Esophagus squamous epithelium (tissue), 5 donors: ENCODE measurements at regions of chr11 and their contacts with region 1.

Region 1: GRCh38 chr11:63635762-63636465 is 21.7 kb upstream of the PLAAT3 start:
- DNase-seq: no peak
- H3K4me3 ChIP-seq: no peak overlapping the region
- H3K27ac ChIP-seq: no peak overlapping the region
- H3K4me1 ChIP-seq: no peaks in the 10 kb centered on the region
- H3K27me3 ChIP-seq: no peaks in the 10 kb centered on the region
- CTCF ChIP-seq: peak; percentile 57 to 85 (median 72)
- POLR2A ChIP-seq: no peak

Region 2: GRCh38 chr11:63478896-63479295 is 157.0 kb before region 1 on chr11:
- intact Hi-C with region 1: loop called (anchors 5 kb)
- DNase-seq: no peak
- H3K4me3 ChIP-seq: no peak overlapping the region
- H3K27ac ChIP-seq: no peak overlapping the region
- H3K4me1 ChIP-seq: no peaks in the 10 kb centered on the region
- H3K27me3 ChIP-seq: no peaks in the 10 kb centered on the region
- CTCF ChIP-seq: peak; percentile 60 to 92 (median 88)
- POLR2A ChIP-seq: no peak

Region 3: GRCh38 chr11:63687845-63688244 is 51.9 kb after region 1 on chr11:
- intact Hi-C with region 1: no loop called
- DNase-seq: no peak
- H3K4me3 ChIP-seq: no peak overlapping the region
- H3K27ac ChIP-seq: peak overlapping the region in 2 of 4 donors; percentile 34 to 38
- H3K4me1 ChIP-seq: peaks cover 9 to 82% (median 29%) of the 10 kb centered on the region in 3 donors
- H3K27me3 ChIP-seq: no peaks in the 10 kb centered on the region
- CTCF ChIP-seq: no peak
- POLR2A ChIP-seq: no peak

Region 4: GRCh38 chr11:63698976-63699733 is 63.2 kb after region 1 on chr11:
- intact Hi-C with region 1: no loop called
- DNase-seq: no peak
- H3K4me3 ChIP-seq: no peak overlapping the region
- H3K27ac ChIP-seq: peak overlapping the region; percentile 39 to 82 (median 66)
- H3K4me1 ChIP-seq: peaks cover 5 to 31% (median 26%) of the 10 kb centered on the region in 3 donors
- H3K27me3 ChIP-seq: no peaks in the 10 kb centered on the region
- CTCF ChIP-seq: no peak
- POLR2A ChIP-seq: no peak